Prostate gland (tissue), 2 donors: ENCODE measurements at regions of chr4 and their contacts with region 1.

Region 1: DNA sequence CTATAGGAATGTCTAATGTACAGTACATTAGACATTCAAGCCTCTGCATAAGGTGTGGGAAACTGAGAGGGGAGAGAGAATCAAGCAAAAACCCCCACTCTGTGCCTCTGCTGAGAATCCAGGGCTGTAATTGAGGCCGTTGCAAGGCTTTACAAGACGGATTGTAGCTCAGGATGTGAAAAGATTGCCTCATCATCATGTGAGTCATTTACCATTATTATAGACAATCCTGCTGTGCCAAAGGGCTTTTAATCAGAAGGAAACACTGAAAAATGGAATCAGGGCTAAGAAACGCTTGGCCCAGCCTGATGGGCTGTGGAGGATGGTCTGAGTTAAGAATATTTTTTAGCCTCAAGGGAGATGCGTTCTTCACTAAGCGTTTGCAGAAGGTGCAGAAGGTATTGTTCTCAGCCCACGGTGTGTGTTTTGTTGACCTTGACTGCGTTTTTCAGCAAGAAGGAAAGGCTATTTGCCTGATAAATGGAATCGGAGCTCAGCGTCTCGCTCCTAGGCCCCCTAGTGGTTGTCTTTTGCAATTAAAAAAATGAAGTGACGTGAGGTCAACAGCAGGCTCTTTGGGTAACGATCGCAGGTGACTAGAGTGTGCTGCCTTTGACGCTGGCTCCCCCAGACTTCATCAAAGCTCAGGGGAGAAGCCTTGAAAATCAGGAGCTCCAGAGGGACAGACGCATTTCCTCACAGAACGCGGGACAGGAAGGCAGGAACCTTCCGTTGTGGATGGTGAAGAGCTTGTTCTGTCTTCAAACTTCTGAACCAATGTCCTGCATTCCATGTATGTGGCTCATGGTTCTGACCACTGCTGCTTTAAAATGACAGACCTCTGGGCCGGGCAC is 18.1 kb upstream of the CHRNA9 start:
- DNase-seq: peak; percentile 34
- H3K4me3 ChIP-seq: peak overlapping the region; percentile 0 to 5
- H3K27ac ChIP-seq: peak overlapping the region; percentile 39 to 65
- H3K4me1 ChIP-seq: no peaks in the 10 kb centered on the region
- H3K27me3 ChIP-seq: no peaks in the 10 kb centered on the region
- CTCF ChIP-seq: peak; percentile 71 to 86 (median 74)
- POLR2A ChIP-seq: no peak

Region 2: DNA sequence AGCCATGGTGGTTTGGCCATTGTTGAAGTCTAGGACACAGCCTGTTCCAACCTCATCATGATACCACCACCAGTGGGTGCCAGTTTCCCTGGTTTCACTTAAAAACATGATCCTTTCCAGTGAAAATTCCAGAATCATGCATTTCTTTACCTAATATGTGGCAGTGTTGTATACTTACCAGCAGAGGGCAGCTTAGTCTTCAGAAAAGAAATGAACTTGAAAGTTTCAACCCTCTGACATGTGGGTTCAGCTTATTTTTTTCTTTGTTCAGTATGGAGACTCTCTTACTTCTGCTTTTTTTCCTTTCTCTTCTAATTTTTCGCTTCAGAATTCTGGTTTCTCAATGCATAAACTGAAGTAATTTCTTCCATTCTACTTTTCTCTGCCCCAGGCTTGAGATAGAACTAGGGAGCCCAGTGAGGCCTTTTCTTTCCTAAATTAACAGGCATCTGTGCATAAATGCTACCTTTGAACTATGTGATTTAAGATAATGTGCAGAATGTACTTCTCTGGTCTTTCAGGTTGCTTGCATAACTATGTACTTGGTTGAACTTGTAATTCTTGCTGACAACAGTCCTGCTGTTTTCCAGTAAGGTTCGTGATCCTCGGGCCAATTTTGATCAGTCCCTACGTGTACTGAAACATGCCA is 847.5 kb before region 1 on chr4:
- intact Hi-C with region 1: loop called (anchors 10 kb)
- DNase-seq: peak; percentile 31
- H3K4me3 ChIP-seq: no peak overlapping the region
- H3K27ac ChIP-seq: peak overlapping the region; percentile 4 to 59
- H3K4me1 ChIP-seq: no peaks in the 10 kb centered on the region
- H3K27me3 ChIP-seq: no peaks in the 10 kb centered on the region
- CTCF ChIP-seq: peak; percentile 65 to 89 (median 81)
- POLR2A ChIP-seq: no peak

Region 3: GRCh38 chr4:40749717-40750460 is 432.9 kb after region 1 on chr4 and contains the start of gene NSUN7:
- intact Hi-C with region 1: no loop called
- DNase-seq: peak; percentile 75
- H3K4me3 ChIP-seq: peak within 1 kb of the TSS; percentile 64 to 66
- H3K27ac ChIP-seq: peak within 1 kb of the TSS; percentile 76 to 84
- H3K4me1 ChIP-seq: peaks cover 4% of the 10 kb centered on the region
- H3K27me3 ChIP-seq: no peaks in the 10 kb centered on the region
- CTCF ChIP-seq: peak in 1 of 4 experiments; percentile 10
- POLR2A ChIP-seq: peak; percentile 45
- total RNA-seq, gene NSUN7: 12.6 to 14.3 TPM